Caco-2 (cell line): ENCODE measurements at regions of chr9 and their contacts with region 1.

Region 1: DNA sequence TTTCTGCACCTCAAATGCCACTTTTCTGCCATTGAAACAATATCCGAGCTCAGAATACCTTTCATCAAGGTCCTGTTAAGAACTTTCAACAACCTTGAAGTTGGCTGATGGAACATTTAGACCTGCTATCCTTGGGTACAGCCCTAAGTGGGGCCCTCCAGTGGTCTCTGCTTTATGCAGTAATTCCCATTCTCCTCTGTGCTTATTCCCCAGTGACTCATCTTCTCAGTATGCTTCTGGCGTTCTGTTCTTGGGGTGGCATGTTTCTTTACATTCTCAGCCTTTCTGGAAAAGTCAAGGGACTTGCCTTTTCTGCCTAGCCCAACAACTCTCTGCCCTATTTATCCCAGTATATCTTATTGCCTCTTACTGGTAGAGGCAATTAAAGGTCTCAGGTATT is 7.1 kb downstream of the ANP32B start:
- DNase-seq: no peak
- H3K4me3 ChIP-seq: no peak overlapping the region
- H3K4me3 Mint-ChIP-seq: no peak overlapping the region
- H3K27ac Mint-ChIP-seq: no peak overlapping the region
- H3K4me1 ChIP-seq: peaks cover 36% of the 10 kb centered on the region
- H3K4me1 Mint-ChIP-seq: peaks cover 52% of the 10 kb centered on the region
- H3K27me3 ChIP-seq: no peaks in the 10 kb centered on the region
- H3K27me3 Mint-ChIP-seq: no peaks in the 10 kb centered on the region
- CTCF ChIP-seq: no peak

Region 2: GRCh38 chr9:97906236-97906831 is 83.9 kb before region 1 on chr9:
- CTCF ChIA-PET with region 1: no interaction called
- POLR2A ChIA-PET with region 1: no interaction called
- intact Hi-C with region 1: no loop called
- DNase-seq: no peak
- H3K4me3 ChIP-seq: no peak overlapping the region
- H3K4me3 Mint-ChIP-seq: no peak overlapping the region
- H3K27ac Mint-ChIP-seq: no peak overlapping the region
- H3K4me1 ChIP-seq: peaks cover under 1% of the 10 kb centered on the region; the same call in 1 of the 2 replicates
- H3K4me1 Mint-ChIP-seq: no peaks in the 10 kb centered on the region
- H3K27me3 ChIP-seq: no peaks in the 10 kb centered on the region
- H3K27me3 Mint-ChIP-seq: no peaks in the 10 kb centered on the region
- CTCF ChIP-seq: no peak

Region 3: DNA sequence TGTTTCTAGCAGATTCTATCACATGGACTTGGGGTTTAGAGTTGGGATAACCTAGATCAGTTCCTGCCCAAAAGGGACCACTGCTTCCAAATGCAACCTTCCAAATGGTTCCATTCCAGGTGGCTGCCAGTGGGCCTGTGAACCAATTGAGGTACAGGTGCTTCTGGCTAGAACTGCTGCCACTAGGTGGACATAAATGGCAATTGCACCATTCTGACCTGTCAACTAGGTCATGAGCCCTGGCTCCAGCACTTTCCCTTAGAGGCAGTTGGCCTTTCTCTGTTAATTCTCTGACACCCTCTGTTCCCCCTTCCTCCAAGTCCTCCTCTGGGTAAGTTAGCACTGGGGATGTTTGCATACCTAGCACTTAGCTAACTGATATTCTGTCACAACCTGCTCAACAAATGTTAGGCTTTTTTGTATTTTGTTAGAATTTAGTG is 35.7 kb before region 1 on chr9:
- CTCF ChIA-PET with region 1: interaction called, 10 read pairs
- POLR2A ChIA-PET with region 1: no interaction called
- intact Hi-C with region 1: no loop called
- DNase-seq: peak; percentile 70 to 77
- H3K4me3 ChIP-seq: no peak overlapping the region
- H3K4me3 Mint-ChIP-seq: no peak overlapping the region
- H3K27ac Mint-ChIP-seq: no peak overlapping the region
- H3K4me1 ChIP-seq: no peaks in the 10 kb centered on the region
- H3K4me1 Mint-ChIP-seq: no peaks in the 10 kb centered on the region
- H3K27me3 ChIP-seq: no peaks in the 10 kb centered on the region
- H3K27me3 Mint-ChIP-seq: peaks cover 6% of the 10 kb centered on the region
- CTCF ChIP-seq: peak; percentile 74 to 76

Region 4: GRCh38 chr9:98228392-98229089 is 238.3 kb after region 1 on chr9:
- CTCF ChIA-PET with region 1: no interaction called
- POLR2A ChIA-PET with region 1: interaction called, 10 read pairs
- intact Hi-C with region 1: no loop called
- DNase-seq: peak; percentile 46 to 68
- H3K4me3 ChIP-seq: no peak overlapping the region
- H3K4me3 Mint-ChIP-seq: peak overlapping the region; percentile 16
- H3K27ac Mint-ChIP-seq: peak overlapping the region; percentile 66
- H3K4me1 ChIP-seq: peaks cover 75% of the 10 kb centered on the region
- H3K4me1 Mint-ChIP-seq: peaks cover 38% of the 10 kb centered on the region
- H3K27me3 ChIP-seq: no peaks in the 10 kb centered on the region
- H3K27me3 Mint-ChIP-seq: no peaks in the 10 kb centered on the region
- CTCF ChIP-seq: no peak